ENCODE measurements at regions of chr16 and their contacts with region 1.

Region 1: DNA sequence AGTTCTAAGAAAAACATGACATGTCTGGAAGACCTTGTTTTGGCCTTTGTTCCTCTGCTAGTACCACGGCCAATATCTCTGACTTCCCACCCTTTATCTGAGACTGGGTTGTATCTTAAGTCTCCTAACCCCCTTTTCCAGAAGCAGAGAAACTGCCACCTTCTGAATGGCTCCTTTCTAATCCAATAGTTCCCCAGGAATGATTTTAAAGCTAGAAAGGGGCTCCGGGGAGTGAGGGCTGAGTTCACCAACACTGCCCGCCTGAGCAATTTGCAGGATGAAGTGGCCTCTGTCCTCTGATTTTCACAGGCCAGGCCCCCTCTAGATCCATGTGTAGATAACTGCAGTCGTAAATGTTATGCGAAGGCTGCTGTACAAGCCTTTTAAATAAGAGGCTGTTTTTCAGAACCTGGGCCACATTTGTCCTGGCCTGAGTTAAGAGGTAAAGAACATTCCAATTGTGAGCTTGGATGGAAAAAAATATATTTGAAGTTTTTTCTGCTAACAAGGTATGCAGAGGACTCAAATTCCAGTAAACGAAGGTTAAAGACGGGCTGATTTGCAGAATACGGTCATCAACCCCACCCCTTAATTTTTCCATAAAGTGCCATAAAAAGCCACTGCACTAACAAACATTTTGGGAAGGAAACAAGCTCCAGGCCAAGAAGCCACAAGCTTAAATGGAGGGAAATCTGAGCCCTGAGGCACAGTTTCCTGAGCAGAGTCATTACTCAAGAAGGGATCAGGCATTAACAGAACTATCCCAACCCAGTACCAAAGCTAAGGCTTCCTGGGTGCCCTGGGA is 117.0 kb upstream of the MAF start:
- DNase-seq: no peak
- ATAC-seq: peak; percentile 13
- H3K4me3 ChIP-seq: no peak overlapping the region
- H3K27ac ChIP-seq: peak overlapping the region; percentile 94 to 97
- H3K4me1 ChIP-seq: peaks cover 7 to 21% of the 10 kb centered on the region in 2 donors
- H3K27me3 ChIP-seq: no peaks in the 10 kb centered on the region

Region 2: GRCh38 chr16:79673635-79674034 is 43.9 kb before region 1 on chr16:
- intact Hi-C with region 1: loop called in 1 of 2 experiments (anchors 5 kb)
- DNase-seq: no peak
- ATAC-seq: no peak
- H3K4me3 ChIP-seq: no peak overlapping the region
- H3K27ac ChIP-seq: peak overlapping the region; percentile 63 to 87
- H3K4me1 ChIP-seq: peaks cover 1 to 11% of the 10 kb centered on the region in 2 donors
- H3K27me3 ChIP-seq: no peaks in the 10 kb centered on the region

Region 3: GRCh38 chr16:79751471-79752184 is 34.1 kb after region 1 on chr16:
- intact Hi-C with region 1: loop called in 1 of 2 experiments (anchors 5 kb)
- DNase-seq: peak in 1 of 2 donors; percentile 70
- ATAC-seq: peak; percentile 94
- H3K4me3 ChIP-seq: no peak overlapping the region
- H3K27ac ChIP-seq: no peak overlapping the region
- H3K4me1 ChIP-seq: no peaks in the 10 kb centered on the region
- H3K27me3 ChIP-seq: no peaks in the 10 kb centered on the region

Region 4: GRCh38 chr16:79770244-79771064 is 52.9 kb after region 1 on chr16:
- intact Hi-C with region 1: loop called in 1 of 2 experiments (anchors 5 kb)
- DNase-seq: peak; percentile 95
- ATAC-seq: peak; percentile 97
- H3K4me3 ChIP-seq: peak overlapping the region; percentile 53 to 68
- H3K27ac ChIP-seq: peak overlapping the region in 1 of 2 donors; percentile 29
- H3K4me1 ChIP-seq: peaks cover 0 to 8% of the 10 kb centered on the region in 2 donors
- H3K27me3 ChIP-seq: no peaks in the 10 kb centered on the region

Measured in aorta (tissue), 5 donors.